ENCODE measurements at regions of chr20 and their contacts with region 1.

Region 1: GRCh38 chr20:21615617-21616080 is 89.8 kb upstream of the PAX1 start:
- DNase-seq: peak; percentile 20
- ATAC-seq: peak in 3 of 8 donors; percentile 55 to 66 (median 63)
- H3K4me3 ChIP-seq: no peak overlapping the region
- H3K27ac ChIP-seq: no peak overlapping the region
- H3K4me1 ChIP-seq: no peaks in the 10 kb centered on the region
- H3K27me3 ChIP-seq: peaks cover 0 to 72% (median 29%) of the 10 kb centered on the region in 7 donors
- CTCF ChIP-seq: peak; percentile 40 to 77 (median 69)

Region 2: DNA sequence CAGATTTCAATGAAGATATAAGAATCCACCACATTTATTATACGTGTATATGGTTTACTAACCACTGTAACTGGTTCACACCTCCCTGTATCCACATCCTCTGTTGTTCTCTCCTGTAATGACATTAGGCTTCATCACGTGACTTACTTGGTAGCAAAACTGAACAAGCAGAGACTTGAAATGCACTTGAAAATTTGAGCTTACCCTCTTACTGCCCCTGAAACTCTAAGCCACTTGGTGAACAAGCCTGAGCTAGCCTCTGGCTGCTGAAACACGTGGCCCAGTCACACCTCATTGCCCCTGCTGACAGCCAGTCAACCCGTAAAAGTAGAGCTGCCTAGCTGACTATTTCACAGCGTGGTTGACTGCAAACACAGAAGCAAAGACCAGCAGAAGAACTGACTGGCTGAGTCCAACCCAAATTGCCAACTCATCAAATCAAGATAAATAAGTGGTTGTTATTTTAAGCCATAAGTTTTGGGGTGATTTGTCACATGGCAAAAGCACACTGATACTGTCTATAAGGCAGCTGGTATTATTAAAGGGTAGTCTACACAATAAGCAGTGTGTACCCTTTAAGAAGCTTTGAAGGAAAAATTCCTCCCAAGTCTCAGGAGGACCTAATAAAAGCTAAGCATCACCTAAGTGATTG is 1012.2 kb before region 1 on chr20:
- intact Hi-C with region 1: no loop called
- DNase-seq: no peak
- ATAC-seq: no peak
- H3K4me3 ChIP-seq: no peak overlapping the region
- H3K27ac ChIP-seq: peak overlapping the region in 1 of 10 donors; percentile 3
- H3K4me1 ChIP-seq: no peaks in the 10 kb centered on the region
- H3K27me3 ChIP-seq: no peaks in the 10 kb centered on the region
- CTCF ChIP-seq: no peak

Region 3: GRCh38 chr20:20837574-20838021 is 778.1 kb before region 1 on chr20:
- intact Hi-C with region 1: loop called in 2 of 10 experiments (anchors 5 to 10 kb)
- DNase-seq: peak; percentile 40 to 41
- ATAC-seq: peak in 4 of 8 donors; percentile 34 to 54 (median 52)
- H3K4me3 ChIP-seq: peak overlapping the region in 9 of 10 donors; percentile 3 to 39 (median 21)
- H3K27ac ChIP-seq: no peak overlapping the region
- H3K4me1 ChIP-seq: peaks cover 0 to 7% (median 4%) of the 10 kb centered on the region in 9 donors
- H3K27me3 ChIP-seq: peaks cover 0 to 48% (median 24%) of the 10 kb centered on the region in 7 donors
- CTCF ChIP-seq: peak; percentile 32 to 82 (median 72)

Region 4: DNA sequence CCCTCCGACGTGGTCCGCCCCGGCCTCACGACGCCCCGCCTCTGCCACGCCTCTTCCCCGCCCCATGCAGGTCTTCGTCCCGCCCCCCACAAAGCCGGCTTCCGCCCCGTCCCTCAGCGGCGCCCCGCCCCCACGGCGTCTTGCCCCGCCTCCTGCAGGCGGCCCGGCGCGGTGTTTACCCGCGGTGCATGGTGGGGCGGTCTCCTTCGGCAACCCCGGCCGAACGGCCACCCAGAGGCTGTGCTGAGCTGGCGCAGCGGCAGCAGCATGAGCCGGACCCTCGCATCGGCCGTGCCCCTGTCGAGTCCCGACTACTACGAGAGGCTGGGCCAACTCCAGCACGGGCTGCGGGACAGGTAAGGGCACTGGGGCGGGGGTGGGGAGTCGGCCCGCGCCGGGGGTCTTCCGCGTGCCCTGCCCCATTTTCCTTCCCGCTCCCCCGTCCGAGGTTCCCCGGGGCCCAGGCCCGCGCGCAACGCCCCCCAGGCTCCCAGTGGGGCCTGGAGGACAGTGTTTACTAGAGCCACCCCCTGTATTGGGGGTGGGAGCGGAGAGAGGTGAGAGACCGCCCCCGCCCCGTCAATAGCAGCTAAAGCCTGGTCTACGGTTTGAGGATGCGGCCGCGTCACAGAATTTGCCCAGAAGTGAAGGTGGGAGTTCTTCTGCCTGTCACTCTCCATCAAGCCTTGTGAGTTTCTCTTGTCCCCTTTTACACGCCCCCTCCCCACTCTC is 489.6 kb before region 1 on chr20 and contains the start of gene KIZ:
- intact Hi-C with region 1: no loop called
- DNase-seq: peak; percentile 95 to 99
- ATAC-seq: peak; percentile 99 to 100 (median 100)
- H3K4me3 ChIP-seq: peak within 1 kb of the TSS; percentile 67 to 98 (median 96)
- H3K27ac ChIP-seq: peak within 1 kb of the TSS; percentile 62 to 89 (median 81)
- H3K4me1 ChIP-seq: peaks cover 0 to 19% (median 11%) of the 10 kb centered on the region in 9 donors
- H3K27me3 ChIP-seq: no peaks in the 10 kb centered on the region
- CTCF ChIP-seq: peak in 7 of 9 donors; percentile 17 to 58 (median 53)
- total RNA-seq, gene KIZ: 16.8 to 38.2 (median 26.5) TPM